SK-N-SH (cell line): ENCODE measurements at regions of chr14 and their contacts with region 1.

Region 1: GRCh38 chr14:103292426-103293374 is 41.3 kb upstream of the EIF5 start:
- DNase-seq: peak; percentile 88
- H3K4me3 ChIP-seq: peak overlapping the region in 1 of 2 experiments; percentile 52; a peak in 1 of 4 replicates
- H3K27ac ChIP-seq: no peak overlapping the region
- H3K4me1 ChIP-seq: peaks cover 0 to 3% of the 10 kb centered on the region in 2 experiments; a peak in 1 of 4 replicates
- H3K27me3 ChIP-seq: no peaks in the 10 kb centered on the region; the same call in 1 of the 2 replicates
- CTCF ChIP-seq: peak; percentile 93
- EP300 ChIP-seq: no peak
- RAD21 ChIP-seq: peak; percentile 97

Region 2: GRCh38 chr14:103078093-103078749 is 214.5 kb before region 1 on chr14:
- CTCF ChIA-PET with region 1: interaction called, 99 read pairs
- POLR2A ChIA-PET with region 1: no interaction called
- DNase-seq: peak; percentile 86
- H3K4me3 ChIP-seq: no peak overlapping the region
- H3K27ac ChIP-seq: no peak overlapping the region
- H3K4me1 ChIP-seq: peaks cover 0 to 5% of the 10 kb centered on the region in 2 experiments; a peak in 1 of 4 replicates
- H3K27me3 ChIP-seq: no peaks in the 10 kb centered on the region
- CTCF ChIP-seq: peak; percentile 70
- EP300 ChIP-seq: no peak
- RAD21 ChIP-seq: peak; percentile 79

Region 3: DNA sequence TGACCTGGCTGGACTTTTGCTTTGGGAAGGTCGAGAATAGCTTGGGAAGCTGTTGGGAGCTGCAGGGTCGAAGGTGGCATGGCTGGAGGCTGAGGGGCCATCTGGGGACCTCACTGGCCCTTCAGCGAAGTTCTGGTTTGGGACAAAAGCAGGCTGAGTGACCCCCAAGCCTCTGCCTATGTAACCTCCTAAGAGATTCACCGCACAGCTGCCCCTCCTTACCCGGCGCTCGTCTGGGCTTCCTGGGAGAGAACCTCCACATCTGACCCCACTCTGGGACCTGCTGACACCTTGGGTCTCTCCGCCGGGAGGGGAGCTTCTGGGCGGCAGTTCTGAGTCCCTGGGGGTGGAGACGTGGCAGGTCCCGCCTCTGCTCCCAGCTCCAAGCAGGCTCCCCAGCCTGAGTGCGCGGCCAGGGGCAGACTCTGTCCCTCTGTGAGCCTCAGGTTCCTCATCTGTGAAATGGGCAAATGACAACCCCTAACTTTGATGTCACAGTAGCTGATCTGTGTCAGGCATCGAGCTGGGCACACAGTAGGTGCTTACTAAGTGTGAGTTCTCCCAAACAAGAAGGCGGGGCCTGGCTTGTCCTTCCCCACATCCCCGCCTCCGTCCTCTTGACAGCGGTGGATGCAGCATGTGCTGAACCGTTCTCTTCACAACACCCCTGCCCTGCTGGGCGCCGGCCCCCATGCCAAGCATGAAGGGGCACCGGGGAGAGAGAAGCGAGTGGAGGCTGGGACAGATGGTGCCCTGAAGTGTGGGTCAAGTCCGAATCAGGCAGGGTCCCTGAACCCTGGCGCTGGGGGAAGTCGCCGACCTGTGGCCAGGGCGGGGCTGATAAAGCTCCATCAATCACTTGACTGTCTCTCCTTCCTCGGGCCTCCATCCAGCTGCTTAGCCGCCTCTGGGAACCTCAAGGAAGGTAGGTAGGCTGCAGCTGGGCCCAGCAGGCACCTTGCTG is 194.4 kb before region 1 on chr14:
- CTCF ChIA-PET with region 1: interaction called, 250 read pairs
- POLR2A ChIA-PET with region 1: no interaction called
- DNase-seq: no peak
- H3K4me3 ChIP-seq: no peak overlapping the region
- H3K27ac ChIP-seq: no peak overlapping the region
- H3K4me1 ChIP-seq: no peaks in the 10 kb centered on the region; a peak in 1 of 4 replicates
- H3K27me3 ChIP-seq: peaks cover 10% of the 10 kb centered on the region
- CTCF ChIP-seq: no peak
- EP300 ChIP-seq: no peak
- RAD21 ChIP-seq: no peak

Region 4: GRCh38 chr14:103185051-103185992 is 107.4 kb before region 1 on chr14:
- CTCF ChIA-PET with region 1: interaction called, 46 read pairs
- POLR2A ChIA-PET with region 1: no interaction called
- DNase-seq: peak; percentile 65
- H3K4me3 ChIP-seq: no peak overlapping the region
- H3K27ac ChIP-seq: no peak overlapping the region
- H3K4me1 ChIP-seq: peaks cover 0 to 6% of the 10 kb centered on the region in 2 experiments; a peak in 1 of 4 replicates
- H3K27me3 ChIP-seq: no peaks in the 10 kb centered on the region
- CTCF ChIP-seq: peak; percentile 81
- EP300 ChIP-seq: no peak
- RAD21 ChIP-seq: peak; percentile 66

Region 5: DNA sequence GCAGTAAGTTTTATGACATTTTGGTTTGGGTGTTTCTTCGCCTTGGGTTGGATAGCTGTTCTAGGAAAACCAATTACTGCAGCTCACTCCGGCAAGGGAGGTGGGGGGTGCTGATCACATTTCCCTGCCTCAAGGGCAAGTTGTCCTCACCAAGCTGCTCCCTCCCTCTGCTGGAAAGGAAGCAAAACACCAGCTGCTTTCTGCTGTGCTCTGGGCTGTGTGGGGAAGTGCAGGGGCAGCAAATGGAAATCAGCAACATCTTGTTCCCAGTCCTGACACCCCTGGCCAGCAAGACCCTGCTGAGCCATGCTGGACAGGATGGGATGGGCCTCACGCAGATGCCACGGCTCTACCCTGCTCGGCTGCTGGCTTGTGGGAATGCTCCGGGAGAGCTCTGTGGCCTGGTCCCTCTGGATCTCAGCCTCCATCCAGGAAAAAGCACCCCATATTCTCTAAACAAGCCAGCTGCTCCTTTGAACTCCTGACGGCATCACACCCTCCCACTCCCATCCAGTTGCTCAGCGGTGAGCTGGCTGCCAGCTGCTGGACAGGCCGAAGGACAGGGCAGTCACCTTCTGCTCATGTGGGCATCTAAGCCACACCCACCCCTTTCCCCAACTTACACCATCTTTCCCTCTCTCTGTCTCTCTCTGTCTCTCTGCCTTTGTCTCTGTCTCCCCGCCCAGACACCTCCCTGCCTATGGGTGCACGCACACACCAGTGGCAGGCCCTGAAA is 11.0 kb before region 1 on chr14:
- CTCF ChIA-PET with region 1: interaction called, 12 read pairs
- POLR2A ChIA-PET with region 1: no interaction called
- DNase-seq: peak; percentile 79
- H3K4me3 ChIP-seq: no peak overlapping the region
- H3K27ac ChIP-seq: no peak overlapping the region
- H3K4me1 ChIP-seq: no peaks in the 10 kb centered on the region; a peak in 1 of 4 replicates
- H3K27me3 ChIP-seq: peaks cover 13% of the 10 kb centered on the region; the same call in 1 of the 2 replicates
- CTCF ChIP-seq: peak; percentile 38
- EP300 ChIP-seq: no peak
- RAD21 ChIP-seq: peak; percentile 67

Region 6: GRCh38 chr14:103311171-103311997 is 18.7 kb after region 1 on chr14:
- CTCF ChIA-PET with region 1: interaction called, 13 read pairs
- POLR2A ChIA-PET with region 1: no interaction called
- DNase-seq: no peak
- H3K4me3 ChIP-seq: no peak overlapping the region
- H3K27ac ChIP-seq: no peak overlapping the region
- H3K4me1 ChIP-seq: no peaks in the 10 kb centered on the region
- H3K27me3 ChIP-seq: no peaks in the 10 kb centered on the region
- CTCF ChIP-seq: no peak
- EP300 ChIP-seq: no peak
- RAD21 ChIP-seq: no peak